HEK293T (cell line): ENCODE measurements at regions of chr1 and their contacts with region 1.

Region 1: GRCh38 chr1:240189386-240189989 is 97.8 kb downstream of the FMN2 start:
- DNase-seq: peak; percentile 53

Region 2: DNA sequence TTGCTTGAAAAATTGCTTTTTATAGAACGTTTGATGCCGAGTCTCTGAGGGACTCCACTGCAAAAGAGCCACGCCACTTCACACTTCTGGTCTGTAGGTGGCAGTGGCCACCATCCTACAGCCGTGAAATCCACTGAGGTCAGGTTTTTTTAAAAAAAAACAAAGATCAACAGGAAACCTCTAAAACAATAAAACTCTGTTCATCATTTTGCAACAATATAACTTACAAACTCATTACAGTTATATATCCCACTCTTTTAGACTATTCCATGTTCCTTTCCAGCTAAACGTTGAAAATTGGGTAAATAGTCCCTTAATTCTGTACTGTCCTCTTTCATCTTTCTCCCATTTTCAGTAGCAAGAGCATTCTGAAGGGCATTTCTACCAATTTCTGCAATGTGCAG is 162.4 kb before region 1 on chr1:
- CTCF ChIA-PET with region 1: interaction called, 16 read pairs
- POLR2A ChIA-PET with region 1: no interaction called
- DNase-seq: peak; percentile 77

Region 3: DNA sequence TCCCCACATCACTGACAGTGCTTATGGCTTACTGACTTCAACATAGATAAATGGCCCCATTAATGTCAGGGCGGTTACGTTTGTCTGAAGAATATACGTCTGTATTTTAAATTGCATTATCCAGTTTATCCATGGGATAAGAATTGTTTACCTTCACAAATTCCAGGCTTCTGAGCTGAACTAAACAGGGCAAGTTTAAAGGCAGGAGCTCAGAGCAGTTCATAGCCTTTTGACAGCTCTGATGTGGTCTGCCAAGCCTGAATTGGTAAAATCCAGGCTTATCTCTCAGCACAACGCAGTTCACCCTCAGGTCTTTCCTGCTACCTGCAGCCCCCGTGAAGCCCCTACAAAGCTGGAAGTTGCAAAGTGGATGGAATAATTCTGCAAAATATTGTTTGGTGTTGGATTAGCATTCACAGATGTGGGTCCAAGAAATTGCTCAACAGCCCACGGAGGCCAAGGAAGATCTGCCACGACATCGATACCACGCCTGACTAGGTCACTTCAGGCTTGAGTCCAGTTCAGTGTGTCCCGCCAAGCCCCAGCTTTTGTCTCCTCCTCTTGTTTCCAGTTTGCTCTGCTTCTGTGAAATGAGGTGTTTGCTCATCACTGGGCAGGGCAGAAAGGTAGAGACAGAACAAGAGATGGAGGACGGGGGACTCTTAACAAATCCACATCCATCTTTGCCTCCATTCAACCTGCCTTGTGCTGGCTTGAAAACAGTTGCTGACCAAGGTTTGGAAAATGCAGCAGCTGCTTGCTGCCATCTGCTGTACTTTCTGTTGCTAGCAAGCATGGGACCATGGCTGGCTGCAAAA is 502.2 kb after region 1 on chr1:
- CTCF ChIA-PET with region 1: interaction called, 10 read pairs
- POLR2A ChIA-PET with region 1: no interaction called
- DNase-seq: peak; percentile 70